Ovary (tissue), 10 donors: ENCODE measurements at regions of chr4 and their contacts with region 1.

Region 1: GRCh38 chr4:4694296-4694772 is 152.5 kb upstream of the STX18 start:
- DNase-seq: peak; percentile 45 to 75 (median 64)
- H3K4me3 ChIP-seq: no peak overlapping the region
- H3K27ac ChIP-seq: no peak overlapping the region
- H3K4me1 ChIP-seq: peaks cover 7% of the 10 kb centered on the region
- H3K27me3 ChIP-seq: no peaks in the 10 kb centered on the region
- CTCF ChIP-seq: no peak
- EP300 ChIP-seq: no peak
- POLR2A ChIP-seq: no peak

Region 2: GRCh38 chr4:4260253-4260652 is 434.1 kb before region 1 on chr4:
- intact Hi-C with region 1: no loop called
- DNase-seq: no peak
- H3K4me3 ChIP-seq: no peak overlapping the region
- H3K27ac ChIP-seq: no peak overlapping the region
- H3K4me1 ChIP-seq: no peaks in the 10 kb centered on the region
- H3K27me3 ChIP-seq: no peaks in the 10 kb centered on the region
- CTCF ChIP-seq: peak in 2 of 3 donors; percentile 26
- EP300 ChIP-seq: no peak
- POLR2A ChIP-seq: no peak

Region 3: DNA sequence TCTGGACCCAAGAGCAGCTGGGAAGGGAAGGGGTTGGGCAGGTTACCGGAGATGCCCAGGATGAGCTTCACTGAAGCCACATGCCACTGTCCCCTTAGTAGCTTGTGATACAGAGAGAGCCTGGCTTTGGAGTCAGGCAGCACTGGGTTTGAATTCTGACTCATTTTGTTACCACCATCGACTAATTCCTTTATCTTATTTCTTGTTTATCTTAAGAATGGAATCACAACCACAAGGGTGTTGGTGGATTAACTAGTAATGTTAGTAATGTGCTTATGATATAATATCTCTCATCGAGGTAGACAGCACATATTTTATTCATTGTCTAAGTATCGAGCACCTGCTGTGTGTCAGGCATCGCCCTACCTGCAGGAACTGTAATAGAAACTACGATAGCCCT is 134.7 kb before region 1 on chr4:
- intact Hi-C with region 1: no loop called
- DNase-seq: no peak
- H3K4me3 ChIP-seq: no peak overlapping the region
- H3K27ac ChIP-seq: no peak overlapping the region
- H3K4me1 ChIP-seq: peaks cover 2% of the 10 kb centered on the region
- H3K27me3 ChIP-seq: no peaks in the 10 kb centered on the region
- CTCF ChIP-seq: no peak
- EP300 ChIP-seq: no peak
- POLR2A ChIP-seq: no peak

Region 4: GRCh38 chr4:4843635-4844291 is 149.4 kb after region 1 on chr4:
- intact Hi-C with region 1: loop called in 1 of 4 experiments (anchors 10 kb)
- DNase-seq: peak in 1 of 5 donors; percentile 15
- H3K4me3 ChIP-seq: no peak overlapping the region
- H3K27ac ChIP-seq: no peak overlapping the region
- H3K4me1 ChIP-seq: no peaks in the 10 kb centered on the region
- H3K27me3 ChIP-seq: no peaks in the 10 kb centered on the region
- CTCF ChIP-seq: no peak
- EP300 ChIP-seq: no peak
- POLR2A ChIP-seq: no peak